BJ (cell line): ENCODE measurements at regions of chr2 and their contacts with region 1.

Region 1: DNA sequence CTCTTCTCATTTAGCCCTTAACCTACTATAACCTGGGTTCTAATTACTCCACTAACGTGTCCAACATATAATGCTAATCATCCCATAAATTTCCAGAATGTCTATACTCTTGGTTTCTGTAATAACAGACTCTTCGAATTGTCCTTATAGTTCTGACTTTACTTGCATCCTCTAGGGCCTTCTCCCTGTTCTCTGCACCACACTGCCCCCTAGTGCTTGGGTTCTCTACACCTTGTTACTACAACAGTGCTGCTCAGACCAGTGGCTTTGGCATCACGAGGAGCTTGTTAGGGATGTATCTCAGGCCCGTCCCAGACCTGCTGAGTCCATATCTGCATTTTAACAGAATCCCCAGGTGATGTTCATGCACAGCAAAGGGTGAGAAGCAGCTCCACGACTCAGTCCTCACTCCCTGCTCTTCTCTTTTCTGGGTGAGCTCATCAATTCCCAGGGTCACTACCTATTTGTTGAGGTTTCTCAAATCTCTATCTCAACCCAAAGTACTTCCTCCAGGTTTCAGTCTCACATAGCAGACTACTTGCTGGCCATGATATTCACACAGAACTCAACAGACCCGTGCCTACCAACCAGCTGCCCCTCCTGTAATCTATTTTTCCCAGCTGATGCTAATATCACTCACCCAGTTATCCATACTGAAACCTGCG is 14.5 kb upstream of the DDX1 start:
- DNase-seq: no peak
- H3K4me3 ChIP-seq: no peak overlapping the region
- H3K27me3 ChIP-seq: peaks cover 2% of the 10 kb centered on the region; the same call in 1 of the 2 replicates
- CTCF ChIP-seq: peak; percentile 90

Region 2: DNA sequence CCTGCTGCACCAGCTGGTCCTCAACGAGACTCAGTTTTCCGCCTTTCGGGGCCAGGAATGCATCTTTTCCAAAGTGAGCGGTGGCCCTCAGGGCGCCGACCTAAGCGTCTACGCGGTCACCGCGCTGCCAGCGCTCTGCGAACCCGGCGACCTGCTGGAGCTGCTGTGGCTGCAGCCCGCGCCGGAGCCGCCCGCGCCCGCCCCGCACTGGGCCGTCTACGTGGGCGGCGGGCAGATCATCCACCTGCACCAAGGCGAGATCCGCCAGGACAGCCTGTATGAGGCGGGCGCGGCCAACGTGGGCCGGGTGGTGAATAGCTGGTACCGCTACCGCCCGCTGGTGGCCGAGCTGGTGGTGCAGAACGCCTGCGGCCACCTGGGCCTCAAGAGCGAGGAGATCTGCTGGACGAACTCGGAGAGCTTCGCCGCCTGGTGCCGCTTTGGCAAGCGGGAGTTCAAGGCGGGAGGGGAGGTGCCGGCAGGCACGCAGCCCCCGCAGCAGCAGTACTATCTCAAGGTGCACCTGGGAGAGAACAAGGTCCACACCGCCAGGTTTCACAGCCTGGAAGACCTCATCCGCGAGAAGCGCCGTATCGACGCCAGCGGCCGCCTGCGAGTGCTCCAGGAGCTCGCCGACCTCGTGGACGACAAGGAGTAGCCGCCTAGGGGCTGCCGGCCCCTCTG is 942.9 kb before region 1 on chr2:
- CTCF ChIA-PET with region 1: interaction called, 12 read pairs
- POLR2A ChIA-PET with region 1: no interaction called
- DNase-seq: no peak
- H3K4me3 ChIP-seq: peak overlapping the region; percentile 34
- H3K27me3 ChIP-seq: peaks cover 25% of the 10 kb centered on the region
- CTCF ChIP-seq: peak; percentile 82

Region 3: DNA sequence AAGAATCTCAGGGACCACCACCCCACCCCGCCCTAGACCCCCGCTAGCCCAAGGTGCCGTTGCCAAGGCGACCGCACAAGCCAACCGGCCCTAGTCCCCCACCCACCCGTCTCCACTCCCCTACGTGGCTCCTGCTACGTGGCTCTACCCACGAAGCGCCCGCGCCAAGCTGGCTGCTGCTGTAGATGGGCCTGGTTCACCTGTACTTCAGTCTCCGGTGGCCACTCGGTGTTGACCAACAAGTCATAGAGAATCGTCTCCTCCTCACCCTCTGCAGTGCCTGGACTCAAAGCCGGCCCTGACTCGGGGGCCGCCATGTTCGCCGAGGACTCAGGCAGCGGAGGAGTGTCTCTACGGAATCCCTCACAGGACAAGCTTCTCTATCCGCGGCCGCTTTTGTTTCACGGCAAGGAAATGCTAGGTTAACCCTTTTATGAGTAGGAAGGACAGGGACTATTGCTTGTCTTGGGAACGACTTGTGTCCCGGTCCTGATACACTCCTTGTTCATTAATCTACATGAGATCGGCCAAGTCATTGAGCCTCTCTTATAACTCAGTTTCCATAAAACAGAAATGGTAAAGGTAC is 16.1 kb before region 1 on chr2 and contains the start of gene NBAS:
- CTCF ChIA-PET with region 1: interaction called, 6 read pairs
- POLR2A ChIA-PET with region 1: interaction called, 24 read pairs
- DNase-seq: peak; percentile 41
- H3K4me3 ChIP-seq: peak within 1 kb of the TSS; percentile 82
- H3K27me3 ChIP-seq: no peaks in the 10 kb centered on the region
- CTCF ChIP-seq: no peak
- polyA plus RNA-seq, gene NBAS: 35.6 and 45.2 TPM in 2 replicates

Region 4: GRCh38 chr2:15591692-15592463 is 14.7 kb after region 1 on chr2 and contains the start of gene DDX1:
- CTCF ChIA-PET with region 1: interaction called, 66 read pairs
- POLR2A ChIA-PET with region 1: no interaction called
- DNase-seq: peak; percentile 20
- H3K4me3 ChIP-seq: peak within 1 kb of the TSS; percentile 80
- H3K27me3 ChIP-seq: no peaks in the 10 kb centered on the region
- CTCF ChIP-seq: 0 out of 2 replicates have a peak, but pooled peaks have one; percentile 6
- polyA plus RNA-seq, gene DDX1: 49.6 and 109 TPM in 2 replicates